Activated CD8-positive, alpha-beta memory T cell treated with anti-CD3 and anti-CD28 coated beads, Interleukin-2, amount 10 ng/mL, durations not matched to agents 7 days and 5 days (primary cell): ENCODE measurements at regions of chrX and their contacts with region 1.

Region 1: DNA sequence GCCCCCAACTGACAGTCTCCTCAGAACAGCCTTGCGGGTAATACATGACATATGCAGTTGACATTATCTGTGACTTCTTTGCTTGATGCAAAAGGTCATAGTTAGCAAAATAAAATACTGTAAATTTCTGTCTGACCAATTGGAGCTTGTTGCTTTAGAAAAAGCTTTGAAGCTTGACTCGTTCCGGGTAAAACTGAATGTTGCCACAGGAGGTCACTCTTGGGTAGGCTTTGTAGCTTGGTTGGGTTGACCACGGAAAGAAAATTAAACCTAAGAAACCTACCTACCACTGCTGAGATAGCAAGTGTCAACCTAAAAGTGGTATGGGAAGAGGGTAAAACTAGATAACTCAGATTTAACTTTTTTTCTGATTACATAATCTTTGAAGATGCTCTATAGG is 23.2 kb downstream of the PRPS2 start:
- DNase-seq: peak; percentile 66
- ATAC-seq: peak; percentile 64
- H3K4me3 Mint-ChIP-seq: no peak overlapping the region
- H3K27ac Mint-ChIP-seq: no peak overlapping the region
- H3K4me1 Mint-ChIP-seq: peaks cover 21% of the 10 kb centered on the region
- H3K27me3 Mint-ChIP-seq: no peaks in the 10 kb centered on the region

Region 2: DNA sequence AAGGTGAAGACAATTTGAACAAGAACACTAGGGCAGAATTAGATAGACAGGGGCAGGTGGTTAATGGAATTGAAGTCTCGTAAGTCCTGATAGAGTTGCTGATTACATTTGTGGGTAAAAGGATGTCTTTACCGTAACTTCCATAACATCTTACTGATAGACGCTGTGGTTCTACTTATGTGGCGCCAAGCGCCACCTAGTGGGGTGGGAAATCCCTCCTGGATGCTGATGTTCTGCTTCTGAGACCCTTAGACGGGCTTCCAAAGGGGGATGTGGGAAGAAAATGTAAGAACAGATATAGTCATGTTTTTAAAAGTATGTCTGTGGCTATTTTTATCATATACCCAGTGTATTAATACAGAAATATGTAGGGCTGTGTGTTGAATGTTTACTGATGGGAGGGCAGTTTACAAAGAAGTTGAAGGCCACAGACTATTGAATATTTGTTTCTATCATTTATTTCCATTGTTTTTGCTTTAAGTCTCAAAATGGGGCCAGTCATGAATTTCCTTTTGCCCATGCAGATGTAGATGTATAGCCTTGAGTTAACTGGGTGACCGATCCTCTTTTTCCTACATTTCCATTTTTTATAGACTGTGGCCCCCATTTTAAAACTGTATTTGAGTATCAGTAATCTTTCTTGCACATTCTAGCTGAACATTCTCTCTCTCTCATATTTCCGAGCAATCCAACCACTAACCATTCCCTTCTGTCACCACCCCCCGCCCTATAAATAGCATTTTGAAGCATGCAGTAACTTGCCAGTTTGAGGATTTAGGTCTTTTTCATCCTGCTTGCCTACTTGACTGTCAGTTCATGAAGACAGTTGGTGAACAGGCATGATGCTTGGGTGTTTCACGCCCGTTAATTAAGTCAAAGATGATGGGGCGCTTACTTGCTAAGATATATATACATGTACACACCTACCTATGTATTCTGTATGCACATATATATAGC is 79.9 kb after region 1 on chrX:
- CTCF ChIA-PET with region 1: interaction called, 31 read pairs
- DNase-seq: peak; percentile 60
- ATAC-seq: peak; percentile 84
- H3K4me3 Mint-ChIP-seq: no peak overlapping the region
- H3K27ac Mint-ChIP-seq: no peak overlapping the region
- H3K4me1 Mint-ChIP-seq: peaks cover 35% of the 10 kb centered on the region
- H3K27me3 Mint-ChIP-seq: no peaks in the 10 kb centered on the region

Region 3: GRCh38 chrX:12901486-12901885 is 87.1 kb after region 1 on chrX:
- CTCF ChIA-PET with region 1: interaction called, 30 read pairs
- DNase-seq: peak; percentile 74
- ATAC-seq: peak; percentile 47
- H3K4me3 Mint-ChIP-seq: no peak overlapping the region
- H3K27ac Mint-ChIP-seq: no peak overlapping the region
- H3K4me1 Mint-ChIP-seq: peaks cover 4% of the 10 kb centered on the region
- H3K27me3 Mint-ChIP-seq: no peaks in the 10 kb centered on the region

Region 4: GRCh38 chrX:13064599-13065143 is 250.3 kb after region 1 on chrX:
- CTCF ChIA-PET with region 1: no interaction called
- DNase-seq: no peak
- ATAC-seq: no peak
- H3K4me3 Mint-ChIP-seq: no peak overlapping the region
- H3K27ac Mint-ChIP-seq: peak overlapping the region; percentile 19
- H3K4me1 Mint-ChIP-seq: peaks cover 23% of the 10 kb centered on the region
- H3K27me3 Mint-ChIP-seq: no peaks in the 10 kb centered on the region